AG04450 (cell line): ENCODE measurements at regions of chr7 and their contacts with region 1.

Region 1: GRCh38 chr7:128387216-128388144 is 22.3 kb downstream of the IMPDH1 start:
- DNase-seq: peak; percentile 24
- H3K4me3 ChIP-seq: no peak overlapping the region
- H3K27ac ChIP-seq: no peak overlapping the region
- H3K27me3 ChIP-seq: peaks cover 20% of the 10 kb centered on the region
- CTCF ChIP-seq: peak; percentile 88

Region 2: DNA sequence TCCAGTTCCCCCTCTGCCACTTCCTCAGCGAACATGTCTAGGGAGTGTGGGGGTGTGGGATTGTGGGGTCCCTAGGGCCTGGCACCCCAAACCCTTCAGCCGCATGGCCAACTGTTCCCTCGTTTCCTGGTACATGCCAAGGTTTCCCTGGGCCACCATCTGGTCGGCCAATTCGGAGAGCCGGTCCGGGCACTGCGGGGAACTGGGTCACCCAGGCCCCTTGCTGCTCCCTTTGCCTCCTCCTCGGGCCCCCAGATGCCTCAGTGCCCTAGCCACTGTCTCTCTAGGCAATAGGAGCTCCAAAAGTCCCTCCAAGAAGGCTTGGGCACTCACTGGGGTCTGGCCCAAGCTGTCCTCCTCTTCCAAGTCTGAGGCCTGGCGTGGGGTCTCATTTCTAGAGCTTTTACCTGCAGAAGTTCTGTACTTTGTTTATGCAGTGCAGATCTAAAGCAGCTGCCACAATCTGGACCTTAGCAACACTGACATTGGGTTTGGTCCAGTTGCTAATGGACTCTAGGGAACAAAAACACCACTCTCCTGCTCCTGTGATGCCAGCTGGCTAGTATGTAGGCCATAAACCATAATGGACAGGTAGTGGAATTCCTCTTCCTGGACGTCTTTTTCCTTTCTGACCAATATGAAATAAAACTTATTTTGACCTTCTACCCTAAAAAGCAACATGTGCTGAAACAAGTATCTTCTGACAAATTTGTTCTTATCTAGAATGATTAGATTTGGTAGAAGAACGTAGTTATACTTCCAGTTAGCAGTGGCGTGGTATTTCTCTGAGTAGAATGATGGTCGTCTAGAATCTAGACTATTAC is 529.2 kb before region 1 on chr7:
- CTCF ChIA-PET with region 1: no interaction called
- POLR2A ChIA-PET with region 1: no interaction called
- DNase-seq: no peak
- H3K4me3 ChIP-seq: no peak overlapping the region
- H3K27ac ChIP-seq: no peak overlapping the region
- H3K27me3 ChIP-seq: no peaks in the 10 kb centered on the region
- CTCF ChIP-seq: no peak

Region 3: GRCh38 chr7:128167042-128167691 is 220.3 kb before region 1 on chr7:
- CTCF ChIA-PET with region 1: no interaction called
- POLR2A ChIA-PET with region 1: no interaction called
- DNase-seq: no peak
- H3K4me3 ChIP-seq: peak overlapping the region; percentile 37
- H3K27ac ChIP-seq: no peak overlapping the region
- H3K27me3 ChIP-seq: peaks cover 62% of the 10 kb centered on the region
- CTCF ChIP-seq: no peak

Region 4: DNA sequence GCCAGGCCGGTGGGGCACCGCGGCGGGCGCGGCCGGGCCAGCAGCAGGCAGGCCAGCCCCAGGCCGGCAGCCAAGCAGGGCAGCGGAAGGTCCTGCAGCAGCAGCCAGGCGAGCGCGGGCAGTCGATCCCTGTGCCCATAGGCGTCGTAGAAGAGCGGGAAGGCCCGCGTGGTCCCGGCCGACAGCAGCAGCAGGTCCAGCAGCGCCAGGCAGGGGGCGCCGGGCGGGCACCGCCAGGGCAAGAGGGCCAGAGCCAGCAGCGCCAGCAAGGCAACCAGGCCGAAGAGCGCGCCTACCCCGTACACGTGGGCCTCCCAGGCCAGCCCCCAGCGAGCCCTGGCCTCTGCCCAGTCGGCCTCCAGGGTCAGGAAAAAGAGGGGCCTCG is 35.3 kb before region 1 on chr7:
- CTCF ChIA-PET with region 1: interaction called, 474 read pairs
- POLR2A ChIA-PET with region 1: interaction called, 11 read pairs
- DNase-seq: no peak
- H3K4me3 ChIP-seq: no peak overlapping the region
- H3K27ac ChIP-seq: no peak overlapping the region
- H3K27me3 ChIP-seq: peaks cover 68% of the 10 kb centered on the region
- CTCF ChIP-seq: peak; percentile 40

Region 5: GRCh38 chr7:128373606-128374005 is 13.9 kb before region 1 on chr7:
- CTCF ChIA-PET with region 1: interaction called, 27 read pairs
- POLR2A ChIA-PET with region 1: no interaction called
- DNase-seq: no peak
- H3K4me3 ChIP-seq: no peak overlapping the region
- H3K27ac ChIP-seq: no peak overlapping the region
- H3K27me3 ChIP-seq: peaks cover 9% of the 10 kb centered on the region
- CTCF ChIP-seq: no peak

Region 6: DNA sequence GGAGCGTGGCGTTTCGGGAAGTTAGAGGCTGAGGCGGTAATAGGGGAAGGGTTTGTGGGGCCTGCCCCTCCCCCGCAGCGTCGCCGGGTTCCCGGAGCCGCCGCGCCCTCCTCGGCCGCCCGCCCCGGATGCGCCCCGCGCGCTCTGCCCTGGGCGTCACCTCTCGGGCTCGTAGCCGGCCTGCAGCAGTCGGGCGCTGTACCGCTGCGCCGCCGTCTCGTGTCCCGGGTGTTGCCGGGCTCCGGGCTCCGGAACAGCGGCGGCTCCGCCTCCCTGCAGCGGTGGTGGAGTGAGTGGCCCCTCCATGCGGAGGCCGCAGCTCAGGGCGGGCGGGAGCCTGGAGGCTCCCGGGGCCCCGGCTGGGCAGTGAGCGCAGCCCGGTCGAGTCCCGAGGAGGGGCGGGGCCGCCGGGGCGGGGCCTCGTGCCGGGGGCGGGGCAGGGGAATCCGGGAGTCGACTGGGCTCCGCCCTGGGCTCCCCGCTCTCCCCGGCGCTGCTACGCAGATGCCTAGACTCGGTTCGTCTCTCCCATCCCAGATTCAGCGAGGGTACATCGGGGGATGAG is 22.2 kb after region 1 on chr7 and contains the start of gene IMPDH1:
- CTCF ChIA-PET with region 1: interaction called, 11 read pairs
- POLR2A ChIA-PET with region 1: no interaction called
- DNase-seq: peak; percentile 13
- H3K4me3 ChIP-seq: peak within 1 kb of the TSS; percentile 82
- H3K27ac ChIP-seq: peak within 1 kb of the TSS; percentile 80
- H3K27me3 ChIP-seq: peaks cover 8% of the 10 kb centered on the region
- CTCF ChIP-seq: no peak
- polyA plus RNA-seq, gene IMPDH1: 43.8 and 56.6 TPM in 2 replicates